Activated T-helper 1 cell treated with anti-CD3 and anti-CD28 coated beads, Interleukin-12 subunit alpha, Interleukin-12 subunit beta, Interleukin-2, Interleukin-4 antibody, amounts not matched to agents 30 ng/mL and 10 ng/mL and 1 ng/mL, durations not matched to agents 14 hours and 24 hours and 36 hours (primary cell): ENCODE measurements at regions of chr12 and their contacts with region 1.

Region 1: GRCh38 chr12:17884581-17884980 is 205.4 kb downstream of the RERGL start:
- DNase-seq: no peak
- H3K4me3 Mint-ChIP-seq: no peak overlapping the region
- H3K27ac Mint-ChIP-seq: no peak overlapping the region
- H3K4me1 Mint-ChIP-seq: no peaks in the 10 kb centered on the region
- H3K27me3 Mint-ChIP-seq: no peaks in the 10 kb centered on the region

Region 2: DNA sequence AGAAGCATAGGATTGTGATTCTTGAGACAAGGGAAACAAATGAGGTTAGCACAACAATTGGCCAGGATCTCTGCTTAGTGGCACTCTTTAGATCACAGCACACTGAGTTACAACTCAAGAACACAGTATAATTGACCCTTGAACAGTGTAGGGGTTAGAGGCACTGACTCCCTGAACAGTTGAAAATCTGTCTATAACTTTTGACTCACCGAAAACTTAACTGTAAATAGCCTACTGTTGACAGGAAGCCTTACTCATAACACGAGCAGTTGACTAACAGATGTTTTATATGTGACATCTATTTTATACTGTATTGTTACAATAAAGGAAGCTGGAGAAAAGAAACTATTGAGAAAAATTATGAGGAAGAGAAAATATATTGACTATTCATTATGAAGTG is 90.7 kb before region 1 on chr12:
- intact Hi-C with region 1: loop called (anchors 5 kb)
- DNase-seq: no peak
- H3K4me3 Mint-ChIP-seq: no peak overlapping the region
- H3K27ac Mint-ChIP-seq: no peak overlapping the region
- H3K4me1 Mint-ChIP-seq: no peaks in the 10 kb centered on the region
- H3K27me3 Mint-ChIP-seq: no peaks in the 10 kb centered on the region

Region 3: DNA sequence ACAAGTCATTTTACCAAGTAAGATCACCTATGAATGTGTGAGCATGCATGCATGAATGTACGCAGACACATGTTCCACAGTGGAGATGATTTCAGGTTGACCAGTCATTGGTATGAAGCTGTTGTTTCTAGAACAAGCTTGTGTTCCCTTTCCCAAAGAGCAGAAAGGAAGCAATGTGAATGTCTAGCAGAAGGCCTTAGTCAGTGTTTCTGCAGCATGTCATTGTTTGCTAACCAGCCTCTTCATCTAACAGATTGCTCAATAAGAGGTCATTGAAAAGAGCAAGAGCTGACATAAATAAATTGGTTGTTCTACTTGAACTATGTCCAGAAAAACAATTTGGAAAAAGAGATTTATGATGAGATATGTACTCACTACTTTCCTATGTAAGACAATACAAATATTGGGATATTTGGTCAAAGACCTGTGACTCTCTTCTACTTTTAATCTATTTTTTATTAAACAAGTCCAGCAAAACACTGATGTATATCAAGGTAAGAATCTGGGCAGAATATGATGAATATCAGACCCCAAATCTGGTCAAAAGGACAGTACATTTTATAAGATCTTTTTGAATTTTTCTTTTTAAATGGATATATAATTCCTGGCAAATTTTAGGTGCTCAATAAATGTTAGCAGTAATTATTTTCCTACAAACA is 662.0 kb after region 1 on chr12:
- intact Hi-C with region 1: no loop called
- DNase-seq: no peak
- H3K4me3 Mint-ChIP-seq: no peak overlapping the region
- H3K27ac Mint-ChIP-seq: no peak overlapping the region
- H3K4me1 Mint-ChIP-seq: no peaks in the 10 kb centered on the region
- H3K27me3 Mint-ChIP-seq: no peaks in the 10 kb centered on the region